HCT116 (cell line): ENCODE measurements at regions of chr10 and their contacts with region 1.

Region 1: DNA sequence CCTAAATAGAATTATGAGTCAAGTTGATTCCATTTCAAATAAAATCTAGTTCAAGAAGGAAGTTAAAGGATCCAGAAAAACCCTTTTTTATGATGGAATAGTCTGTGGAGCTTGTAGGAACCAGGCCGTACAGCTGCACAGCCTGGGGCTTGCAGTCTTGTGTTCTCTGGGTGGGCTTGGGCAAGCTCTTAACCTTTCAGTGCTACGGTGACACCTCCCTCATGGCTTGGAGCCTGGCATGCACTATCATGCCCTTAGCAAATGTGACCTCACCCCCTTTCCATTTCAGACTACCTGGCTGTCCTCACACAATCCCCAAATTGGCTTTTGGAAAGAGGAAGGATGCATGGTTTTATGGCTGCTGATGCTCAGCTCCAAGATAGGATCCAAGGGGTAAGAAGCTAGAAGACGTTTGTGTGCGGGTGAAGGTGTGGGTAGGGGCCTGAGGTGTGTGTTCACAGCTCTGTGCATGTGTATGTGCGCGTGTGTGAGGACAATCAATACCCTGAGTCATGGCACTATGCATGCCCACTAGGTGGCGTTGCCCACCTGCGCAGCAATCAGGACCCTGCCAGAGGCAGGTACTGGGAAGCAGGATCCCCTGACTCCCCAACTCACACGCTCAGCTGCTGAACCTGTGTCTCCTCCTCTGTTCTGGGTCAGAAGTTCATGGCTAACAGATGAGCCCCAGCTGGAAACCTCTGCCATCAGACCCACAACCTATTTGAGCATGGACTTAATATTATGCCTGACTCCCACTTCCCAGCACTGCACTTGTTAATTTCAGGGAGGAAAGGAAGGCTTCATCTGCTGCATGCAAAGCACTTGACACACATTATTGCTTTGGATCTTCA is 113.4 kb downstream of the PTPN20 start:
- DNase-seq: peak; percentile 62
- ATAC-seq: peak; percentile 99
- H3K4me3 ChIP-seq: no peak overlapping the region
- H3K27ac ChIP-seq: no peak overlapping the region
- H3K4me1 ChIP-seq: peaks cover 0 to 4% of the 10 kb centered on the region in 2 experiments; a peak in 1 of 4 replicates
- H3K27me3 ChIP-seq: no peaks in the 10 kb centered on the region
- CTCF ChIP-seq: peak; percentile 75 to 94 (median 94); a peak in 5 of 6 replicates
- POLR2A ChIP-seq: no peak
- RAD21 ChIP-seq: peak; percentile 90

Region 2: GRCh38 chr10:47008769-47009168 is 15.9 kb before region 1 on chr10:
- CTCF ChIA-PET with region 1: no interaction called
- POLR2A ChIA-PET with region 1: no interaction called
- RAD21 ChIA-PET with region 1: no interaction called
- intact Hi-C with region 1: no loop called
- DNase-seq: no peak
- ATAC-seq: no peak
- H3K4me3 ChIP-seq: no peak overlapping the region
- H3K27ac ChIP-seq: no peak overlapping the region
- H3K4me1 ChIP-seq: no peaks in the 10 kb centered on the region
- H3K27me3 ChIP-seq: no peaks in the 10 kb centered on the region
- CTCF ChIP-seq: no peak
- POLR2A ChIP-seq: no peak
- RAD21 ChIP-seq: no peak

Region 3: DNA sequence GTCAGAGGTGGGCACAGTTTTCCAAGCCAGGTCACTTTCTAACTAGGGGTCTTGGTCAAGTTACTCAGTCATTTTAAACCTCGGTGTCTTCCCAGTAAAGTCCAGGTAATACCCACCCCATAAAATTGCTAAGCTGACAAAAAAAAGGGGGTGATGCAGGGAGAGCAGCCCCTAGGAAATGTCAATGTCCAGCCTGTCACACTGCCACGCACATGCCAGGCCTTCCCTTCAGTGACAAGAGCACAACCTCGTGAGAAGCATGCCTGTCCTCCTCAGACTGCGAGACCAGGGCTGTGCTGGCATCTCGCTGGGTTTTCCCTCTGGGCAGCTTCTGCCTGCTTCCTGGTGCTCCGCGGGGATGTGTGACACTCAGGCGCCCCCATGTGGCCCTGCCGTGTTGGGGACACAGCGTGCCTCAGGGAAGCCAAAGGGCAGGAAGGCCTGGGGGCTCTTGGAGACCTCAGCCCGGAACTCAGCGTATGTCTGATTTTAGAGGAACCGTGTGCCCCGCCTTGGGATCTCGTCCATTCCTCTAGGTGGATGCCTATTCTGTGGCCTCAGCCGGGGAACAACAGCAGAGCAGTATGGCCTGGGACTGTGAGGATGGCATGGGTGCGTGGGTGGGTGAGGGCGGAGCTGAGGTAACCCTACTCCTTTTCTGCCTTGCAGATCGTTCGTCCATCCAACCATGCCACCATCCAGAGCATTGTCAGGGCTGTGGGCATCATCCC is 287.5 kb after region 1 on chr10:
- CTCF ChIA-PET with region 1: interaction called, 5 read pairs
- POLR2A ChIA-PET with region 1: no interaction called
- RAD21 ChIA-PET with region 1: interaction called, 3 to 5 read pairs
- intact Hi-C with region 1: loop called (anchors 1 kb)
- DNase-seq: peak; percentile 31
- ATAC-seq: peak; percentile 91
- H3K4me3 ChIP-seq: no peak overlapping the region
- H3K27ac ChIP-seq: no peak overlapping the region
- H3K4me1 ChIP-seq: no peaks in the 10 kb centered on the region; a peak in 1 of 4 replicates
- H3K27me3 ChIP-seq: peaks cover 6% of the 10 kb centered on the region; the same call in 1 of the 2 replicates
- CTCF ChIP-seq: peak; percentile 63 to 76 (median 66)
- POLR2A ChIP-seq: no peak
- RAD21 ChIP-seq: peak; percentile 86

Region 4: GRCh38 chr10:47340608-47341170 is 316.1 kb after region 1 on chr10:
- CTCF ChIA-PET with region 1: interaction called, 13 read pairs
- POLR2A ChIA-PET with region 1: no interaction called
- RAD21 ChIA-PET with region 1: no interaction called
- intact Hi-C with region 1: loop called (anchors 1 kb)
- DNase-seq: peak; percentile 48
- ATAC-seq: peak; percentile 96
- H3K4me3 ChIP-seq: no peak overlapping the region
- H3K27ac ChIP-seq: no peak overlapping the region
- H3K4me1 ChIP-seq: no peaks in the 10 kb centered on the region
- H3K27me3 ChIP-seq: no peaks in the 10 kb centered on the region
- CTCF ChIP-seq: peak; percentile 81 to 98 (median 97)
- POLR2A ChIP-seq: no peak
- RAD21 ChIP-seq: peak; percentile 86